ENCODE measurements at regions of chr20 and their contacts with region 1.

Region 1: GRCh38 chr20:32040142-32041022 is 11.7 kb upstream of the HCK start:
- DNase-seq: peak; percentile 90
- H3K4me3 ChIP-seq: peak overlapping the region; percentile 42
- H3K27ac ChIP-seq: peak overlapping the region; percentile 72
- H3K4me1 ChIP-seq: peaks cover 68% of the 10 kb centered on the region
- CTCF ChIP-seq: no peak

Region 2: DNA sequence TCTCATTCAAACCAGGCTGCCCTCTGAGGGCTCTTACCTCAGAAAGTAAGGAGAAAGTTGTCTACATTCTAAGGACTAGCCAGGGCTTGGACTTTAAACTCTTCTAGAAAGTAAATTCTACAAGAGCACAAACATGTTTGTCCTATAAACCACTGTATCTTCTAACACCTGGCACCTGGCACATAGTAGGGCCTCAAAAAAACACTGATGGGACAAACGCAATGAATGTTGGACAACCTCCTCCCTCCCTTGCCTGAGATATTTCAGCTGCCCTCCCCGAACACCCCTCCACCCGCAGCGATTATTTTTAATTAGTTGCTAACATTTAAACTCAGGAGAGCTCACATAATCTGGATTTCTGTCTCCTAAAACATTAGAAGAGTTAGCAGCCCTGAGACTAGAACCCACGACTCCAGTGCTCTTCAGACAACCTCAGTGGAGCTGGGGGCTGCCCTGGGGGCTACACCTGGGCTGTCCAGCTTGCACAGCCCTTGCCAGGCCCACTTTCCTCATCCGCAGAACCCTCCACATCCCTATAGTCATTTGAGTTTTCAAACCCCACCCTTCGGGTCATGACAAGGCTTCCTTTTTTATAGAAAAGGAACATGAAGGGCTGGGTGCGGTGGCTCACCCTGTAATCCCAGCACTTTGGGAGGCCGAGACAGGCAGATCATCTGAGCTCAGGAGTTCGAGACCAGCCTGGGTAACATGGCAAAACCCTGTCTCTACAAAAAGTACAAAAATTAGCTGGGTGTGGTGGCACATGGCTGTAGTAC is 16.5 kb after region 1 on chr20:
- CTCF ChIA-PET with region 1: no interaction called
- POLR2A ChIA-PET with region 1: interaction called, 3 read pairs
- intact Hi-C with region 1: loop called (anchors 2 kb)
- DNase-seq: no peak
- H3K4me3 ChIP-seq: no peak overlapping the region
- H3K27ac ChIP-seq: no peak overlapping the region
- H3K4me1 ChIP-seq: no peaks in the 10 kb centered on the region
- CTCF ChIP-seq: no peak

Region 3: GRCh38 chr20:32091888-32092346 is 51.5 kb after region 1 on chr20:
- CTCF ChIA-PET with region 1: interaction called, 40 read pairs
- POLR2A ChIA-PET with region 1: interaction called, 34 read pairs
- intact Hi-C with region 1: loop called (anchors 1 kb)
- DNase-seq: peak; percentile 83
- H3K4me3 ChIP-seq: no peak overlapping the region
- H3K27ac ChIP-seq: no peak overlapping the region
- H3K4me1 ChIP-seq: peaks cover 11% of the 10 kb centered on the region
- CTCF ChIP-seq: peak; percentile 95

Region 4: GRCh38 chr20:32109392-32110172 is 69.2 kb after region 1 on chr20 and contains the start of gene TM9SF4:
- CTCF ChIA-PET with region 1: interaction called, 6 read pairs
- POLR2A ChIA-PET with region 1: interaction called, 10 read pairs
- intact Hi-C with region 1: no loop called
- DNase-seq: peak; percentile 98
- H3K4me3 ChIP-seq: peak within 1 kb of the TSS; percentile 82
- H3K27ac ChIP-seq: peak within 1 kb of the TSS; percentile 71
- H3K4me1 ChIP-seq: peaks cover 13% of the 10 kb centered on the region
- CTCF ChIP-seq: no peak
- total RNA-seq, gene TM9SF4: 16.6 and 20.8 TPM in 2 replicates

Region 5: DNA sequence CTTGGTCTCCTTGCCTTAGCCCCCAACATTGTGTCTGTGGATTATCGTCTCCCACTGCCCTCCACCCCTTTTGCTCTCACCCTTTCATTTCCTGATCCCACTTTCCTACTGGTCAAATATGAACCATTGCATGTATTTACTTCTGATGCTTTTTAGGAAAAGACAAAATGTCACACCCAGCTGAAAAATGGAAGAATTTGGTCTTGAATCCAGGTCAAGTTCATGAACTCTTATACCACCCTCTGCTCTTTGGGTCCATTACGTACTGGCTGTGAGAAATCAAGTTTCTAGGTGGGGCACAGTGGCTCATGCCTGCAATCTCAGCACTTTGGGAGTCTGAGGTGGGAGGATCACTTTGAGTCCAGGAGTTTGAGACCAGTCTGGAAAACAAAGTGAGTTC is 221.3 kb after region 1 on chr20:
- CTCF ChIA-PET with region 1: no interaction called
- POLR2A ChIA-PET with region 1: no interaction called
- intact Hi-C with region 1: no loop called
- DNase-seq: no peak
- H3K4me3 ChIP-seq: no peak overlapping the region
- H3K27ac ChIP-seq: no peak overlapping the region
- H3K4me1 ChIP-seq: peaks cover 57% of the 10 kb centered on the region
- CTCF ChIP-seq: no peak

Measured in OCI-LY7 (cell line).